ENCODE measurements at regions of chr5 and their contacts with region 1.

Region 1: GRCh38 chr5:151862811-151863472 is 61.7 kb downstream of the GLRA1 start:
- DNase-seq: no peak
- ATAC-seq: no peak
- H3K4me3 ChIP-seq: no peak overlapping the region
- H3K4me3 Mint-ChIP-seq: no peak overlapping the region
- H3K27ac ChIP-seq: no peak overlapping the region
- H3K27ac Mint-ChIP-seq: no peak overlapping the region
- H3K4me1 ChIP-seq: no peaks in the 10 kb centered on the region
- H3K4me1 Mint-ChIP-seq: no peaks in the 10 kb centered on the region
- H3K27me3 ChIP-seq: no peaks in the 10 kb centered on the region
- H3K27me3 Mint-ChIP-seq: no peaks in the 10 kb centered on the region
- CTCF ChIP-seq: no peak

Region 2: DNA sequence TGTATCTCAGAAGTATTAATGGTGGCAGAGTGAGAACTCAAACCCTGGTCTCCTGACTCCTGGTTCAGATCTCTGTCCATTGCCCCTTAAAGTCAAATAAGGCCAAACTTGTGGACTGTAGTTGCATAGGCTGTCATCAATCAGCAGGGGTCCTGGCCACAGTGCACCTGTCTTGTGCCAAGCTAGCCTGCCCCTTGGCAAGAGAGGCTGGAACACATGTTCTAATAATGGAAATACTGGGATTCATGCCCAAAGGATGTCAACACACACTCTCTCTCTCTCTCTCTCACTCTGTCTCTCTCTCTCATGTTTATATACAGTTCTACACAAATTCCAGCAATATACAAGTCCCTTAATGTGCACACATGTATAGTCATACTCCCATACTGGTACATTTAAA is 17.4 kb after region 1 on chr5:
- CTCF ChIA-PET with region 1: no interaction called
- POLR2A ChIA-PET with region 1: no interaction called
- intact Hi-C with region 1: loop called in 1 of 2 experiments (anchors 2 kb)
- DNase-seq: no peak
- ATAC-seq: no peak
- H3K4me3 ChIP-seq: no peak overlapping the region
- H3K4me3 Mint-ChIP-seq: no peak overlapping the region
- H3K27ac ChIP-seq: no peak overlapping the region
- H3K27ac Mint-ChIP-seq: no peak overlapping the region
- H3K4me1 ChIP-seq: no peaks in the 10 kb centered on the region
- H3K4me1 Mint-ChIP-seq: no peaks in the 10 kb centered on the region
- H3K27me3 ChIP-seq: no peaks in the 10 kb centered on the region
- H3K27me3 Mint-ChIP-seq: peaks cover 2% of the 10 kb centered on the region
- CTCF ChIP-seq: no peak

Region 3: DNA sequence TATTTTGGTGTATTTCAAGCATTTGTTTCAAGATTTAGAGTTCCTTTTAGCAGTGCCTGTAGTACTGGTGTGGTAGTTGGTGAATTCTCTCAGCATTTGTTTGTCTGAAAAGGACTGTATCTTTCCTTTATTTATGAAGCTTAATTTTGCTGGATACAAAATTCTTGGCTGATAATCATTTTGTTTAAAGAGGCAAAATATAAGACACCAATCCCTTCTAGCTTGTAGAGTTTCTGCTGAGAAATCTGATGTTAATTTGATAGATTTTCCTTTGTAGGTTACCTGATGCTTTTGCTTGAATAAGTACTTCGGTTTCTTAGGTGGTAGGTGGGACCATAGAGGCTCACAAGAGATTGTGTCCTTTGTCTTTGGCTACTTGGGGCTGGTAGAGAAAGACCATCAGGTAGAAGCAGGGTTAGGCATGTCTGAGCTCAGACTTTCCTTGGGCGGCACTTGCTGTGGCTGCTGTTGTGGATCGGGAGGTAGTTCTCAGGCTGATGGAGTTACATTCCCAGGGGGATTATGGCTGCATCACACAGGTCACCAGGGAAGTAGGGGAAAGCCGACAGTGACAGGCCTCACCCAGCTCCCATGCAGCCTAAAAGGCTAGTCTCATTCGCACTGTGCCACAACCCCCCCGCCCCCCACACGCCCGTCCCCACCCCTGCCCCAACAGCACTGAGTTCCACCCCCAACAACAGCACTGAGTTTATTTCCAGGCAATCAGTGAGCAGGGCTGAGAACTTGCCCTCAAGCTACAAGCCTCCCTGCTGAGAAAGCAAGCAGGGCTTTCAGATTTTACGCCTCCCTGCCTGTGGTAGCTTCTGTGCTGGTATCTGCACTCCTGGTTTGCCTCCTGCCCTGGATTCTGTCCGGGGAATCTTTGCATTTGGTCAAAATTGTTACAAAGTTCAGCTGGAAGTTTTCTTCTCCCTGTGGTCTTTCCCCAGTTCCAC is 188.8 kb after region 1 on chr5:
- CTCF ChIA-PET with region 1: no interaction called
- POLR2A ChIA-PET with region 1: no interaction called
- intact Hi-C with region 1: no loop called
- DNase-seq: no peak
- ATAC-seq: no peak
- H3K4me3 ChIP-seq: no peak overlapping the region
- H3K4me3 Mint-ChIP-seq: no peak overlapping the region
- H3K27ac ChIP-seq: no peak overlapping the region
- H3K27ac Mint-ChIP-seq: no peak overlapping the region
- H3K4me1 ChIP-seq: no peaks in the 10 kb centered on the region
- H3K4me1 Mint-ChIP-seq: no peaks in the 10 kb centered on the region
- H3K27me3 ChIP-seq: no peaks in the 10 kb centered on the region
- H3K27me3 Mint-ChIP-seq: no peaks in the 10 kb centered on the region
- CTCF ChIP-seq: no peak